Caco-2 (cell line): ENCODE measurements at regions of chr7 and their contacts with region 1.

Region 1: DNA sequence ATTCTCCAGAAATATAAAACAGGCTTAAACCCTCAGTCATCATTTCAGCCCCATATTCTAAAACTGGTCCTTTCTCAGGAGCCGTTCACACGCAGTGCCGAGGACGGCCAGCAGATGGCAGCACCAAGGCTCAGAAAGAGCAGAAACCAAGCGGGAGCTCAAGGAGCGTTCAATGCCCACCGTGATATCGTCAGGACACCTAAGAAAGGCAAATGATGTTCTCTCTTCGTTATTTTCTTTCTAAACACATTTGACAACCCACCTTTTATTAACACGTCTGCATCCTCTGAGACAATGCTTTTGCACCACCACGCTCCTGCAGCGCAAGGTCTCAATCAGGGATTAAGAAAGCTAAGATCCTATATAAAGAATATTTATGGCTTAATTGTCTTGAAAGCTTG is 45.7 kb upstream of the RBM33 start:
- DNase-seq: peak; percentile 81 to 90
- H3K4me3 ChIP-seq: no peak overlapping the region
- H3K4me3 Mint-ChIP-seq: peak overlapping the region; percentile 47
- H3K27ac Mint-ChIP-seq: no peak overlapping the region
- H3K4me1 ChIP-seq: peaks cover 17% of the 10 kb centered on the region
- H3K4me1 Mint-ChIP-seq: peaks cover 7% of the 10 kb centered on the region
- H3K27me3 ChIP-seq: no peaks in the 10 kb centered on the region
- H3K27me3 Mint-ChIP-seq: no peaks in the 10 kb centered on the region
- CTCF ChIP-seq: peak; percentile 88 to 97

Region 2: DNA sequence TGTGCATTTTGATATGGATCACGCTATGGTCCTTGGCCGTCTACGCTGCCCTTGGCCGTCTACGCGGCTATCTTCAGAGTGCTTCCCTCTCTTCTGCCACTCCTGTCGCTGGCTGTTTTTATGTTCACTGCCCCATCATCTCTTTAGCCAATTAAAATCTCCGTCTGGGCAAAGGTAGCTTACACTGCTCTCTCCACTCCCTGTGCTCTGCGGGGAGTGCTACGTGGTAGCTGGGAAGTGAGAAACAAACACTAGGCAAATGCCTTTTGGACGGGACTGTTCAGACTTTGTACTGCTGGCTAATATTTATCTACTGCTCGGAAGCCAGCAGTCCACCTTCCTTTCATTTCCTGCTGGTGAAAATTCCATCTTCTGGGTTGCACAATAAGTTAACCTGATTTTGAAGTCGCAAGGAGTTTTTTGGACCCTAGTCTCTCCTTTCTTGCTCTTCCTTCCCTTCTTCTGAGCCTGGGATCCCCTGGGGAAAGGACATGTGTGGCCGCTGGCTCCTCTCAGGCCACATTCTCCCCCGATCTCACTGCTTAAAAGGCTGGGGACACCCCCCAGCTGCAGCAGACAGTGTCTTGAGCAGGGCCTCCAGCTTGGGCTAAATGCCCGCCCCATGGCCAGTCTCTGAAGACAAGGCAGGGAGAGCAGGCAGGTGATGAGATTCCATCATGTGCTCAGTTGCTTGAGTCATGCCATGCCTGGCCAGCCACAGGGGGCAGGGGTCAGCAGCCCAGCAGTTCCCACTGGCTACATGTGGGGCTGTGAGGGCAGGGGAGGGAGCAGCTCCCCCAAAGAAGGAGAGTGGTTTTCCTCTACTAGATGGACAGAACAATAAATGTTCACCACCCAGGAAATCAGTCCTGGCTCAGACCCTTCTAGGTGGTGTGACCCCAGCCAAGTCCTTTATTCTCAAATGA is 20.2 kb after region 1 on chr7:
- CTCF ChIA-PET with region 1: interaction called, 43 read pairs
- POLR2A ChIA-PET with region 1: interaction called, 11 read pairs
- intact Hi-C with region 1: loop called (anchors 1 kb)
- DNase-seq: peak; percentile 91 to 96
- H3K4me3 ChIP-seq: peak overlapping the region; percentile 15; the same call in 1 of the 2 replicates
- H3K4me3 Mint-ChIP-seq: peak overlapping the region; percentile 70
- H3K27ac Mint-ChIP-seq: peak overlapping the region; percentile 95
- H3K4me1 ChIP-seq: peaks cover 33% of the 10 kb centered on the region
- H3K4me1 Mint-ChIP-seq: peaks cover 19% of the 10 kb centered on the region
- H3K27me3 ChIP-seq: no peaks in the 10 kb centered on the region
- H3K27me3 Mint-ChIP-seq: no peaks in the 10 kb centered on the region
- CTCF ChIP-seq: peak; percentile 21 to 35

Region 3: GRCh38 chr7:155653803-155654202 is 55.0 kb after region 1 on chr7:
- CTCF ChIA-PET with region 1: interaction called, 4 read pairs
- POLR2A ChIA-PET with region 1: no interaction called
- intact Hi-C with region 1: loop called (anchors 2 kb)
- DNase-seq: no peak
- H3K4me3 ChIP-seq: no peak overlapping the region
- H3K4me3 Mint-ChIP-seq: no peak overlapping the region
- H3K27ac Mint-ChIP-seq: no peak overlapping the region
- H3K4me1 ChIP-seq: peaks cover 13% of the 10 kb centered on the region; the same call in 1 of the 2 replicates
- H3K4me1 Mint-ChIP-seq: peaks cover 34% of the 10 kb centered on the region
- H3K27me3 ChIP-seq: no peaks in the 10 kb centered on the region
- H3K27me3 Mint-ChIP-seq: no peaks in the 10 kb centered on the region
- CTCF ChIP-seq: no peak

Region 4: DNA sequence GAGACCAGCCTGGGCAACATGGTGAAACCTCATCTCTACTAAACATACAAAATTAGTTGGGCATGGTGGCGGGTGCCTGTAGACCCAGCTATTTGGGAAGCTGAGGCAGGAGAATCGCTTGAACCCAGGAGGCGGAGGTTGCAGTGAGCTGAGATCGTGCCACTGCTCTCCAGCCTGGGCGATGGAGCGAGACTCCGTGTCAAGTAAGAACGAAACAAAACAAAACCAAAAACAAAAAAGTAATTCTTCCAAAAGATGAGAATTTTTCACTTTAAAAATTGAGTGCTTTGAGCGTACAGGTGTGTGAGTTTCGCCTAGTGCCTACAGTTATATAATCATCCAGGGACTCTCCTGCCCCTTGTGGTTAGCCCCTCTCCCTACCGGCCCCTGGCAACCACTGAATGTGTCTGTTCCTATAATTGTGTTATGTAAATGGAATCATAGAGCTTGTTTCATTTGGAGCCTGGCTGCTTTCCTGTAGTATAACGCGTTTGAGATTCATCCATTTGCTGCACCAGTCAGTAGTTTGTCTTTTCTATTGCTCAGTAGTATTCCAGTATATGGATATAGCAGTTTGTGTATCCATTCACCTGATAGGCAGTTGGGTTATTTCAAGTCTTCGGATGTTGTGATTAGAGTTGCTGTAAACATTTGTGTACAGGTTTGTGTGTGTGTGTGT is 125.7 kb after region 1 on chr7:
- CTCF ChIA-PET with region 1: interaction called, 4 read pairs
- POLR2A ChIA-PET with region 1: no interaction called
- intact Hi-C with region 1: loop called (anchors 5 kb)
- DNase-seq: peak in 1 of 2 experiments; percentile 19
- H3K4me3 ChIP-seq: no peak overlapping the region
- H3K4me3 Mint-ChIP-seq: no peak overlapping the region
- H3K27ac Mint-ChIP-seq: no peak overlapping the region
- H3K4me1 ChIP-seq: peaks cover 9% of the 10 kb centered on the region
- H3K4me1 Mint-ChIP-seq: peaks cover 9% of the 10 kb centered on the region
- H3K27me3 ChIP-seq: no peaks in the 10 kb centered on the region
- H3K27me3 Mint-ChIP-seq: no peaks in the 10 kb centered on the region
- CTCF ChIP-seq: peak; percentile 14 to 40

Region 5: DNA sequence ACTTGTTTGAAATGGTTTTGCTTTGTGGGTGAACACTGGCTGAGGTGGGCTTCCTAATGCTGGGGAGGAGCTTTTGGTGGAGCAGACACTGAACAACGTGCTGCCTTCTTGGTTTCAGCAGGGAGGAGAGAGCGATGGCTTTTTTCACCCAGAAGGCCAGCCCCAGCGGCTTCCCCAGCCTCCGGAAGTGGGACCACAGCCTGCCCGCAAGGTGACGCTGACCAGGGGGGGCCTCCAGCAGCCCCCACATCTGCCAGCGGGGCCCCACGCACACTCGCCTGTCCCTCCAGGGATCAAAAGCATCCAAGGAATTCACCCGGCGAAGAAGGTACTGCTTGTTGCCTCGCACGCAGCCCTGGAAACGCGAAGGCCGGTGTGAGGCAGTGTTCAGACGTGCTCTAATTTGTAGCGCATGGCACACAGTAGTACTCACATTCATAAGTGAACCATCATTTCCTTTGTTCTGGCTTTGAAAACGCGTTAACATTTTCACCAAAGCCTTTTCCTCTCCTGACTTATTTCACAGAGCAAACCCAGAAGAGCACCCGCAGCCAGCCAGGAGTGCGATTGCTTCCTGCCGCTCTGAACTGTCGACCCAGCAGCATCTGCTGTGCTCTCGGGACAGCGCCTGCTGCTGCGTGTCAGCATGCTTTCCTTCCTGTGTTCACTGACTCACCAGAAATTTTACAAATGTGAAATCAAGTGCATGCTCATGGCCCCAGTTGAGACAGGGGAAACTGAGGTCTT is 165.1 kb after region 1 on chr7:
- CTCF ChIA-PET with region 1: interaction called, 5 read pairs
- POLR2A ChIA-PET with region 1: no interaction called
- intact Hi-C with region 1: loop called (anchors 1 kb)
- DNase-seq: no peak
- H3K4me3 ChIP-seq: no peak overlapping the region
- H3K4me3 Mint-ChIP-seq: no peak overlapping the region
- H3K27ac Mint-ChIP-seq: peak overlapping the region; percentile 13
- H3K4me1 ChIP-seq: no peaks in the 10 kb centered on the region
- H3K4me1 Mint-ChIP-seq: peaks cover 6% of the 10 kb centered on the region
- H3K27me3 ChIP-seq: no peaks in the 10 kb centered on the region
- H3K27me3 Mint-ChIP-seq: no peaks in the 10 kb centered on the region
- CTCF ChIP-seq: no peak